Colonic mucosa (tissue), 4 donors: ENCODE measurements at regions of chr4 and their contacts with region 1.

Region 1: DNA sequence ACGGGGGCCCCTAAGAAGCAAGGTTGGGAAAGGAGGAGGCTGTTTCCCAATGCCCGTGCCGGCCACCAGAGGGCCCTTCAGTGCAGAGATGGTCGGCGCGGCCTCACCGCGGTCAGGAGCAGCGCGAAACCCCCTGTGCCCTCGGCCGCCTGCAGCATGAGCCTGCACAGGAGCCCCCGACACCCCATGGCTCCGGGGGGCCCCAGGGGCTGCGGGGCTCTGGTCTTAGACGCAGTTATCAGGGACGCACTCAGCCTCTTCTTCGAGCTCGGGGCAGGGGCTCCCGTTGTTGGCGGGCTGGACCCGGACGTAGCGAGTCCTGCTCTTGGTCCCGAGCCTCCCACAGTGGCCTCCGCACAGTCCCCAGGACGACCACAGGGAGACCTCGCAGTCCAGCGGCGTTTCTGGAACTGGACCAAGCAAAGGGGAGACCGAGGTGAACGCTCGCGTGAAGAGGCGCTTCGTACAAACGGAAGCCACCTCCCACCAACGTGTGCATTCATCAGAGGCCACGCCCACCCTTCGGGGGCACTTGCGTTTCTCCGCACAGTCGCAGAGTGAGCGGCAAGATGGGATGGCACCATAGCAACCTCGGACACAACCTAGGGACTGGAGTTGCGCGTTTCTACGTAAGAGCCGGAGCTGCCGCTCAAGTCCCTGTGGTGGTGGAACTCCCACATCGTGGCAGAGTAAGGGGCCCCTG is 5.0 kb downstream of the SPON2 start:
- DNase-seq: peak; percentile 86
- H3K4me3 ChIP-seq: peak overlapping the region; percentile 72
- H3K27ac ChIP-seq: peak overlapping the region; percentile 27
- H3K4me1 ChIP-seq: peaks cover 25% of the 10 kb centered on the region
- H3K27me3 ChIP-seq: peaks cover 21% of the 10 kb centered on the region
- CTCF ChIP-seq: peak; percentile 86

Region 2: DNA sequence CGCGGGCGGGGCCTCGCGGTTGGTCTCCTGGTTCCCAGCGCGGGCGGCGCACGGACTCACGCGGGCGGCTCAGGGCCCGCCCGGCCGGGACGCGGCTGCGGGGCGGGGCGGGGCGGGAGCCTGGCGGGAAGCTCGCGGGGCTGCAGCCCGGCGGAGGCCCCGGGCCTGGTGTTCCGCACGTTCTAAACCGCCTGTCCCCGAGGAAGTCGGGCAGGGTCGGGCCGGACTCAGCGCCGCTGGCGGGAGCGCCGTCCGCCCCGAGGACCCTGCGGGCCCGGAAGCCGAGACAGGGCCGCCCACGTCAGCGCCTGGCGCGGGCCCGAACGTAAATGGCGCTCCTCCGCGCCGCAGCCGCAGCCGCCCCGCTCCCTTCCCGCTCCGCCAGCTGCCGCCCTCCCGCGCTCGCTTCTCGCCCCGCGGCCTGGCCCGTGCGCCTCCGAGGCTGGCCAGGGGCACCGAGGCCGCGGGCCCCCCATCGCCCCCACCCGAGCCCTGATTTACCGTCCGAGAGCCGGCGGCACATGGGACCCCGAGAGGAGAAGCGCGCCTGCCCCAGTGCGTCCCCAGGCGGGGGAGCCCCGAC is 81.8 kb after region 1 on chr4:
- intact Hi-C with region 1: loop called (anchors 5 kb)
- DNase-seq: peak; percentile 82
- H3K4me3 ChIP-seq: peak overlapping the region; percentile 62
- H3K27ac ChIP-seq: peak overlapping the region; percentile 94
- H3K4me1 ChIP-seq: peaks cover 26% of the 10 kb centered on the region
- H3K27me3 ChIP-seq: no peaks in the 10 kb centered on the region
- CTCF ChIP-seq: no peak

Region 3: GRCh38 chr4:1266881-1267763 is 99.7 kb after region 1 on chr4:
- intact Hi-C with region 1: loop called (anchors 5 kb)
- DNase-seq: no peak
- H3K4me3 ChIP-seq: no peak overlapping the region
- H3K27ac ChIP-seq: no peak overlapping the region
- H3K4me1 ChIP-seq: no peaks in the 10 kb centered on the region
- H3K27me3 ChIP-seq: no peaks in the 10 kb centered on the region
- CTCF ChIP-seq: no peak